ENCODE measurements at regions of chr17 and their contacts with region 1.

Region 1: GRCh38 chr17:30506481-30506880 is 29.3 kb downstream of the GOSR1 start:
- DNase-seq: no peak
- ATAC-seq: no peak
- H3K4me3 ChIP-seq: no peak overlapping the region
- H3K27ac ChIP-seq: no peak overlapping the region
- H3K4me1 ChIP-seq: no peaks in the 10 kb centered on the region
- H3K27me3 ChIP-seq: no peaks in the 10 kb centered on the region
- CTCF ChIP-seq: no peak

Region 2: GRCh38 chr17:30554839-30555751 is 48.6 kb after region 1 on chr17:
- CTCF ChIA-PET with region 1: interaction called, 10 read pairs
- POLR2A ChIA-PET with region 1: no interaction called
- in situ Hi-C with region 1: no loop called
- intact Hi-C with region 1: no loop called
- DNase-seq: no peak
- ATAC-seq: peak; percentile 71
- H3K4me3 ChIP-seq: no peak overlapping the region
- H3K27ac ChIP-seq: no peak overlapping the region
- H3K4me1 ChIP-seq: no peaks in the 10 kb centered on the region
- H3K27me3 ChIP-seq: no peaks in the 10 kb centered on the region
- CTCF ChIP-seq: peak; percentile 67

Region 3: DNA sequence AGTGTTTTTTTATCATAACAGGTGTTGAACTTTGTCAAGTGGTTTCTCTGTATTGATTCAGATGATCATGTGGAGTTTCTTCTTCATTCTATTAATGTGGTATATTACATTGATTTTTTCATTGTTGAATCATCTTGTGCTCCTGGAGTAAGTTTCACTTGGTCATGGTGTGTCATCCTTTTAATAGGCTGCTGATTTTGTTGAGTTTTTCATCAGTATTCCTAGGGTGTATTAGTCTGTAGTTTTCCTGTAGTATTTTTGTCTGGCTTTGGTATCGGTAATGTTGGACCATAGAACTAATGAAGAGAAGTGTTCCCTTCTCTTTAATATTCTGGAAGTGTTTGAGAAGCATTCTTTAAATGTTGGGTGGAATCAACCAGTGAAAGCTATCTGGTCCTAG is 691.5 kb after region 1 on chr17:
- CTCF ChIA-PET with region 1: no interaction called
- POLR2A ChIA-PET with region 1: no interaction called
- in situ Hi-C with region 1: no loop called
- intact Hi-C with region 1: no loop called
- DNase-seq: no peak
- ATAC-seq: no peak
- H3K4me3 ChIP-seq: no peak overlapping the region
- H3K27ac ChIP-seq: no peak overlapping the region
- H3K4me1 ChIP-seq: no peaks in the 10 kb centered on the region
- H3K27me3 ChIP-seq: no peaks in the 10 kb centered on the region
- CTCF ChIP-seq: no peak

Measured in Panc1 (cell line).